ENCODE measurements at regions of chr7 and their contacts with region 1.

Region 1: DNA sequence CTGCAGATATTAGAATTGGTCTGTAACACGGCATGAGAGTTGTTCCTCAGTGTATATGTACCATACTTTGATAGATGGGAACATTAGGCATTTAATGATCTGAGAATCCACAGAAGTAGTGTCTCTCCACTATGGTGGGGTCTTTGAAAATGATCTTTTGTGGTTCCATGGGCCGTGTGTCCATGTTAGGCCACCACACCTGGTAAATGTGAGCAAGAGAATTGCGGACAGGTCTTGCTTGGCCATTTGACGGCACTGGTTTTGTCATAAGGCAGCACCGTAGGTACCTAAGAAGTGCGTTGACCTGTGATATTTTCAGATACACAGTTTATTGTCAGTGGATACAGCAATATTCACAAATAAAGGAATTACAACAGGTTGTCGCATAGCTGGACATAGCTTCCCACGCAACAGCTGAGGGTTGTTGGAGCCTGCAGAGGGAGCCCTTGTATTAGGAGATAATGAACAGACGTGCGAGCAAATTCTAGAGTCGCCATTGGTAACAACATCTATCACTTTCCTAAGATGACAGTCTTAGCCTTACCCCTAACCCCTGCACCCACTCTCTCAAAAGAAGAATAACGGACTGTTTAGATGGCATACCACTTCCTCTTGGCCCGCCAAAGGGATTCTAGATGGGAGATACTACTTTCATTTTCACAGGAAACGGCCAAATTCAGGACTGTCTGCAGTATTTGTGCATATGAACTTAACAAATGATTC is 111.4 kb downstream of the COL28A1 start:
- DNase-seq: peak; percentile 65 to 74
- H3K4me3 ChIP-seq: no peak overlapping the region
- H3K4me1 ChIP-seq: 0 out of 2 replicates have a peak, but pooled peaks cover 5% of the 10 kb centered on the region
- H3K27me3 ChIP-seq: peaks cover 14% of the 10 kb centered on the region

Region 2: DNA sequence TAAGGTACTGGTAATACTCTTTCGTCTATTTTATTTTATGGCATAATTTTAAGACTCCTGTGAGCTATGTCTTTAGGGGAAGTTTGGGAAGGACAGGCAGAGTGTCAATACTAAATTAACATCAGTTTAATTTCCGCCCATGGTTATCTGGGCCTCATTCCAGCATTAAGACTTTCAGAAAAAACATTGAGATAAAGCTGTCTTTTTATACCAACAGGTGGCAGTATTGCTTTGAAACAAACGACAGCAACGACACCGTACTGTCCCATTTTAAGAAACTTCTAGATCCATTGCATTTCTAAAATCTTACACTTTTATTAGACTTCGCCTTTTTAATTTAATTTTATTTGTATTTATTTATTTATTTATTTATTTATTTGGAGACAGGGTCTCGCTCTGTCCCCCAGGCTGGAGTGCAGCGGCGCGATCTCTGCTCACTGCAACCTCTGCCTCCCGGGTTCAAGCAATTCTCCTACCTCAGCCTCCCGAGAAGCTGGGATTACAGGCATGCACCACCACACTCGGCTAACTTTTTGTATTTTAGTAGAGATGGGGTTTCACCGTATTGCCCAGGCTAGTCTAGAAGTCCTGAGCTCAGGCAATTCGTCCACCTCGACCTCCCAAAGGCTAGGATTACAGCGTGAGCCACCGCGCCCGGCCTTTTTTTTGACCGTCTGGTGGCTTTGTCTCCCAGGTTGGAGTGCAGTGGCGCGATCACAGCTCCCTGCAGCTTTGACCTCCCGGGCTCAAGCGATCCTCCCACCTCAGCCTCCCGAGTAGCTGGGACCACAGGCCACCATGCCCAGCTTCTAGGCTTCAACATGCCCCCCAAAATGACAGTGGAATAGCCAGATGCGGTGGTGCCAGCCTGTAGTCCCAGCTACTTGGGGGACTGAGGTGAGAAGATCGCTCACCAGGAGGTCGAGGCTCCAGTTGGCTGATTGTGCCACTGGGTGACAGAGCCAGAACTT is 320.7 kb before region 1 on chr7:
- in situ Hi-C with region 1: loop called (anchors 25 kb)
- DNase-seq: peak in 1 of 2 experiments; percentile 64
- H3K4me3 ChIP-seq: no peak overlapping the region
- H3K4me1 ChIP-seq: no peaks in the 10 kb centered on the region
- H3K27me3 ChIP-seq: no peaks in the 10 kb centered on the region

Region 3: DNA sequence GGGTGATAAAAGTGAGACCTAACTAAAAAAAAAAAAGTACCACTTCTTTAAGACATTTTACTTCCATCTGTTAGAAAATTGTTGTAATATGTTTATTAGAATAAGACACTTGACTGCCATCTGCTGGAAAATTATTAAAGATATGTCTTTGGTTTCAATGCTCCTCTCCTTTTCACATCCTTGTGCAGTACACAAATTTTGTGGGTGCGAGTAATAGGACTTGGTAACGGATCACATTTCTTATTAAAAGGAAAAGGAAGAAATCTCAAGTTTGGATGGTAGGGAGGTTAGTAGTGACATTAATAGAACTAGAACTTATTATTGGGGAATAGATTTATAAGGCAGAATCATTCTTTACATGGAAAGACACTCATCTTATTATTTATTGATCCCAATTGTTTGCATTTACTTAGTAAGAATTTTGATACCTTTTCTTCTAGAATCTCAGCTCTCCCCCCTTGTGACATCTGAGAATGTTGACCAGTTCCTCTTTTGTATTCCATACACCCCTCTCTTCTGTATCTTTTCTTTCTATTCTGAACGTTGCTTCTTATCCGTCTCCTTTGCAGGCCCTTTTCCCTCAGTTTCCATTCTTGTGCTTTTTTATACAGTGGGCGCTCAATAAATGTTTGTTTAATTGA is 337.1 kb after region 1 on chr7:
- in situ Hi-C with region 1: loop called (anchors 10 kb)
- DNase-seq: peak in 1 of 2 experiments; percentile 39
- H3K4me3 ChIP-seq: no peak overlapping the region
- H3K4me1 ChIP-seq: peaks cover 11% of the 10 kb centered on the region
- H3K27me3 ChIP-seq: no peaks in the 10 kb centered on the region

Region 4: DNA sequence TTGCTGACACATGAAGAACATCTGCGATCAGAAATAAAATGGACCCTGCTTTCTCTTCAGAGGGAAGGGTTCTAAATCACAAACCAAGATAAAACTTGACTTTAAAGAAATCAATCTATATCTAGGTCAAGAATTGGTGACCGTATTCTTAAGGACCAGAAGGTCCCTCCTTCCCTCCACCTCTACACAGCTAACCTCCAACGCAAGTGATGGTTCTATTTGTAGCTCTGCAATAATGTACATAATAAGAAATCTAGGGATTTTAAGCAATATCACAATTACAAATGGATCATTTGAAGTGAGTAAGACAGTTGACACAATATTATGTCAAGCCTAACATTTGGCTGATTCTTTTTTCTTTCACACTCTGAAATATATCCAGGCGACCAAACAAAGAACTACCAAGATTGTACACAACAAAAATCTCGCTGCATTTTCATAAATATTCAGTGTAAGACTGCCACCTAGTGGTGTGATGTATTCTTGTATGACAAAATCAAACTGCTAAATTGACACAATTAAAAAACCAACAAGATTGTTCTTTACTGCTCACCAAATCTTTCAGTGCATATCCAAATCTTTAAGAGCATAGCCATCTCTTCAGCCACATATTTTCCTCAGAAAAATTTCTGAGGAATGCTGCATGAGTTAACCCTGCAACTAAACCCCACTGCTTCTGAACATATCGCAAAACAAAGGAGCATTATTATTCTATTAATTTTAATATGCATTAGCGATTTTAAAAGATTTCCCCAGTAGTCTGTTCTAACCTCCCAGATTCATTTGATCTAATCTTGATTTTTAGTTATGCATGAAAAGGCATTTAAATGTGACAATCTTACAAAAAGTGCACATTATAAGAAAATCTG is 793.1 kb after region 1 on chr7:
- in situ Hi-C with region 1: loop called (anchors 10 kb)
- DNase-seq: peak; percentile 48 to 67
- H3K4me3 ChIP-seq: no peak overlapping the region
- H3K4me1 ChIP-seq: no peaks in the 10 kb centered on the region
- H3K27me3 ChIP-seq: no peaks in the 10 kb centered on the region

Measured in HAP-1 (cell line).